ENCODE measurements at regions of chr12 and their contacts with region 1.

Region 1: DNA sequence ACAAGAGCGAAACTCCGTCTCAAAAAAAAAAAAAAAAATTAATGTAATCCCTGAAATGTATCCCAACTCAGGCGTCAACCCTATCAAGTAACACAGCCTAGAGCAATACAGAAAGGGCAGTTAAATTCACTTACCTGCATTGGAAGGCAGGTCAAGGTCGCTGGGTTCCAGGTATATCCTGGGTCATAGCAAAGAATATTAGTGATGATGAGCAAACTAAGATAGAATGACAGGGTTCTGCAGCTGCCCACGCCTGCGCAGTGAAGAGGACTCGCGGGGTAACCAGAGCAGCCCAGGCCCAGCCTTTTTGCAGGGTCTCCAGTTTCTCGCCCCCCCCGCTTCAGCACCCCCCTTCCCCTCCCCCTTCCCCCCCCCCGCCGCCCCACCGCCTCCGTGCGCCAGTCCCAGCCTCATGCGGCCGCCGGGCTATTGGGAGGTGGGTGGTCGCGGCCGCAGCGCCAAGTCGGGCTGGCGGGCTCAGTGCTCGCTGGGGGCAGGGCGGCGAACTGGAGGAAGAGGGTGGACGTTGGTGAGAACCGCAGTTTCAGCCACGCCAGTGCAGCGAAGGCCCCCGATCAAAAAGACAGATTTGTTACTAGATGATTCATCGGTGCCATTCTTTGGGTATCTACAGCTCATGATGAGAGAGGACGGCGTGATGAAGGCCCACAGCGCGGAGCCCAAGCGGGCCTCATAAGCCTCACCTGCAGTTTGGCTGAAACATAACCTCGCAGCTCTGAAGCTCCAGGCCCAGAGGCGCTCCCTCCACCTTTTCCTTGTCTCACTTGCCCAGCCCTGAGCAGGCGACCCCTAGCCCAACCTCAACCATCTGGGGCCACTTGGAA is 20.2 kb downstream of the SLC2A3 start:
- DNase-seq: peak in 4 of 9 experiments; percentile 22 to 60 (median 34)
- ATAC-seq: peak; percentile 23
- H3K4me3 ChIP-seq: no peak overlapping the region
- H3K4me3 Mint-ChIP-seq: peak overlapping the region; percentile 35
- H3K27ac ChIP-seq: no peak overlapping the region
- H3K27ac Mint-ChIP-seq: no peak overlapping the region
- H3K4me1 ChIP-seq: no peaks in the 10 kb centered on the region
- H3K4me1 Mint-ChIP-seq: peaks cover 24% of the 10 kb centered on the region
- H3K27me3 ChIP-seq: no peaks in the 10 kb centered on the region
- H3K27me3 Mint-ChIP-seq: no peaks in the 10 kb centered on the region
- CTCF ChIP-seq: no peak

Region 2: DNA sequence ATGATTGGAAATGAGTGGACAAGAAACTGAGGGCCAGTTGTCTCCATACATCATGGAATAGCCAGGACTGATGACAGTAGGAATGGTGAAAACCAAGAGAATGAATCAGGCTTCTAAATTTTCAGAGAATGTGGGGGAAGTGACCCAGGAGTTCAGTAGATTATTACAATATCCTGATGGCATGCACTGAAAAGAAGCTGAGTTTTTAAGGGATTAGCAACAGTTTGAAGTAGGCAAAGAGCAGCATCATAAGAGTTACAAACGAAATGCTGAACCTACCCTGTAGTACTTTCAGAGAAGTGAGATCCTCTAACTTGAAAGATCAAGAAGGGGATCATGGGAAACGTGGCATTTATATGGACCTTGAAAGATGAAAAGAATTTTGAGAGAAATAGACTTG is 56.2 kb before region 1 on chr12:
- CTCF ChIA-PET with region 1: no interaction called
- POLR2A ChIA-PET with region 1: no interaction called
- intact Hi-C with region 1: loop called in 1 of 2 experiments (anchors 5 kb)
- DNase-seq: no peak
- ATAC-seq: no peak
- H3K4me3 ChIP-seq: no peak overlapping the region
- H3K4me3 Mint-ChIP-seq: no peak overlapping the region
- H3K27ac ChIP-seq: no peak overlapping the region
- H3K27ac Mint-ChIP-seq: no peak overlapping the region
- H3K4me1 ChIP-seq: no peaks in the 10 kb centered on the region
- H3K4me1 Mint-ChIP-seq: peaks cover 9% of the 10 kb centered on the region
- H3K27me3 ChIP-seq: no peaks in the 10 kb centered on the region
- H3K27me3 Mint-ChIP-seq: peaks cover 5% of the 10 kb centered on the region
- CTCF ChIP-seq: no peak

Region 3: DNA sequence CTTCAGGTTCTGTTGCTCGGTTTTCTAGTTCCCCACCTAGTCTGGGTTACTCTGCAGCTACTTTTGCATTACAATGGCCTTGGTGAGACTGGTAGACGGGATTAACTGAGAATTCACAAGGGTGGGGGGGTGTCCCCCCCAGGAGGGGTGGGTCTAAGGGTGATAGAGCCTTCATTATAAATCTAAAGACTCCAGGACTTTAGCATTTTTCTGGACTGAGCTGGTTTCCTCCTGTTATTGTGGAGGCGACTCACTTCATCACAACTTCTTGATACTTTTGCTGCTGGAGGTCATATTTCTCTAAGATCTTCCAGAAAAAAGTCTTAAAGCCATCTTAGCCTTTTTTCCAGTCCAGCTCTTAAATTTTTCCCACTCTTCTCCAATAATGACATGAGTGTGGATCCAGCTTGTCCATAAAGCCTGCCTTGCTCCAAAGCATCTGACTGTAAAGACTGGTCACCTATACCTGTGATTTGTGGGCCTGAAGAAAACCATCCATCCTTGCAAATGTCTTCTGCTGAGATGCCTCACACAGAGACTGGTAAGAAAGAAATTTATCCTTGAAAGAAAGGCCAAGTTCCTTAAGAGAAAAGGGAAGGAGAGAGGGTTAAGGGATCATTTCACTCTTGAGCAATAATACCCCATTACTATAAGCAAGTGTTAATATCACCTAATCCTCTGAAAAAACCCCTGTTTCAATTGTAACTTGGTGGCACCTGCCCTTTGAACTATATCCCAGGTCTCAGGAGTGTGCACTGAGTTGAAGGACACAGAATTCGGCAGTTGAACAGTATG is 23.4 kb before region 1 on chr12:
- CTCF ChIA-PET with region 1: no interaction called
- POLR2A ChIA-PET with region 1: no interaction called
- intact Hi-C with region 1: no loop called
- DNase-seq: no peak
- ATAC-seq: no peak
- H3K4me3 ChIP-seq: no peak overlapping the region
- H3K4me3 Mint-ChIP-seq: no peak overlapping the region
- H3K27ac ChIP-seq: no peak overlapping the region
- H3K27ac Mint-ChIP-seq: no peak overlapping the region
- H3K4me1 ChIP-seq: no peaks in the 10 kb centered on the region
- H3K4me1 Mint-ChIP-seq: no peaks in the 10 kb centered on the region
- H3K27me3 ChIP-seq: no peaks in the 10 kb centered on the region
- H3K27me3 Mint-ChIP-seq: peaks cover 6% of the 10 kb centered on the region
- CTCF ChIP-seq: no peak

Region 4: GRCh38 chr12:8057839-8058238 is 142.1 kb after region 1 on chr12:
- CTCF ChIA-PET with region 1: no interaction called
- POLR2A ChIA-PET with region 1: no interaction called
- intact Hi-C with region 1: no loop called
- DNase-seq: no peak
- ATAC-seq: no peak
- H3K4me3 ChIP-seq: no peak overlapping the region
- H3K4me3 Mint-ChIP-seq: no peak overlapping the region
- H3K27ac ChIP-seq: no peak overlapping the region
- H3K27ac Mint-ChIP-seq: peak overlapping the region; percentile 57
- H3K4me1 ChIP-seq: no peaks in the 10 kb centered on the region
- H3K4me1 Mint-ChIP-seq: no peaks in the 10 kb centered on the region
- H3K27me3 ChIP-seq: no peaks in the 10 kb centered on the region
- H3K27me3 Mint-ChIP-seq: no peaks in the 10 kb centered on the region
- CTCF ChIP-seq: no peak

Measured in CD8-positive, alpha-beta T cell (primary cell).